ENCODE measurements at regions of chr18 and their contacts with region 1.

Region 1: GRCh38 chr18:50429207-50429948 is 54.5 kb downstream of the SKA1 start:
- DNase-seq: peak; percentile 46
- H3K4me3 Mint-ChIP-seq: no peak overlapping the region
- H3K27ac Mint-ChIP-seq: no peak overlapping the region
- H3K4me1 Mint-ChIP-seq: no peaks in the 10 kb centered on the region
- H3K27me3 Mint-ChIP-seq: no peaks in the 10 kb centered on the region
- CTCF ChIP-seq: peak; percentile 45

Region 2: DNA sequence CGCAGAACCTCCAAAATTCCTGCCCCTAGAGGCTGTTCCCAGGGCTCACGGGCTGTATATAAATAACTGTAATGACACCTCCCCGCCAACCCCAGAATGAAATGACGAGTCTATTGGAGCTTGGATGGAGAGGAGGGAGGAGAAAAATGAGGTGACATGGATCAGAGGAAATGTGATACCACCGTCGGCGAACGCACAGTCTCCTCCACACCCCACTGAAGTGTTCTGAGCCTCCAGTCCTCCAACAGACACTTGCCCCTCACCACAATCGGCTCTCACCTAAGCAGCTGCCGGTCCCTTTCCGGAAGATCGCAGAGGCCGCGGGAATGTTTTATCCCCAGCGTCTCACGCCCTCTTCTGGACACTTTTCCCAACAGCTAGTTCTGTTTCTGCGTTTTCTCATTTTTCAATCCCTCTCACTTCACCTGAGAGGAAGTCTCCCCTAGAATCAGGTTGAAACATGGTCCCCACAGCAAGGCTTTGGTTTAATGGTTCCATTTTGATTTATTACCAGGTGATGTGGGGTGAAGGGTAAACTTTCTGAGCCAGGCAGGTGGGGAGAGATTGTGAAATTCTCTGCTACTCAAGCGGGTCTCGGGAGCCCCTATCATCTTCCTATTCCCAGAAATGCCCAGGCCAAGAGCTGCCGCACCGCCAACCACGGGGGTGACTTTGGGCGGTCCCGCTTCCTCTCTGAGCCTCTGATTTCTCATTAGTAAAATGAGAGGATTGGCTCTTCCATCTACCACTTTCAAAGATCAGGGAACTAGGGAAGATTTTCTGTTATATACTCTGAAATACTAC is 225.4 kb before region 1 on chr18:
- CTCF ChIA-PET with region 1: interaction called, 11 read pairs
- POLR2A ChIA-PET with region 1: no interaction called
- intact Hi-C with region 1: no loop called
- DNase-seq: peak; percentile 70
- H3K4me3 Mint-ChIP-seq: peak overlapping the region; percentile 37
- H3K27ac Mint-ChIP-seq: no peak overlapping the region
- H3K4me1 Mint-ChIP-seq: no peaks in the 10 kb centered on the region
- H3K27me3 Mint-ChIP-seq: peaks cover 11% of the 10 kb centered on the region
- CTCF ChIP-seq: peak; percentile 68

Region 3: GRCh38 chr18:50218432-50219197 is 210.8 kb before region 1 on chr18:
- CTCF ChIA-PET with region 1: interaction called, 19 read pairs
- POLR2A ChIA-PET with region 1: no interaction called
- intact Hi-C with region 1: loop called (anchors 2 kb)
- DNase-seq: peak; percentile 53
- H3K4me3 Mint-ChIP-seq: no peak overlapping the region
- H3K27ac Mint-ChIP-seq: no peak overlapping the region
- H3K4me1 Mint-ChIP-seq: no peaks in the 10 kb centered on the region
- H3K27me3 Mint-ChIP-seq: no peaks in the 10 kb centered on the region
- CTCF ChIP-seq: peak; percentile 53

Region 4: GRCh38 chr18:50388988-50389387 is 40.4 kb before region 1 on chr18:
- CTCF ChIA-PET with region 1: interaction called, 13 read pairs
- POLR2A ChIA-PET with region 1: no interaction called
- intact Hi-C with region 1: no loop called
- DNase-seq: no peak
- H3K4me3 Mint-ChIP-seq: no peak overlapping the region
- H3K27ac Mint-ChIP-seq: no peak overlapping the region
- H3K4me1 Mint-ChIP-seq: no peaks in the 10 kb centered on the region
- H3K27me3 Mint-ChIP-seq: no peaks in the 10 kb centered on the region
- CTCF ChIP-seq: no peak

Region 5: DNA sequence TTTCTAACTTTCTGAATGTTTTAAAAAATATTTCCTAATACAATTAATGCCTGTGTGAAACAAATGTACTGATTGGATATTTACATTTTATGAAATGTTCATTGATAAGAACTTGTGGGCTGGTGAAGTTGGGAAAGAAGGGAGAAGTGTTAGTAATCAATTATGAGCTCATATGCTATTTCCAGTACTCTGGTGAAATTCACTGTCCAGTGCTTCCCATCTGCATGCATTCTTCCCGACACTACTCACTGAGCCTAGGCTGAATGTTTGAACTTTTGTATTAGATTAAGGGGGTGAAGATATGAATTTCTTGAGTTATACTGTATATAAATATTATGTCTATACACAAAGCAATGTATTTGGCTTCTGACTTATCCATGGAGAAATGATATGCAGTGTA is 18.5 kb before region 1 on chr18:
- CTCF ChIA-PET with region 1: interaction called, 12 read pairs
- POLR2A ChIA-PET with region 1: no interaction called
- intact Hi-C with region 1: no loop called
- DNase-seq: no peak
- H3K4me3 Mint-ChIP-seq: no peak overlapping the region
- H3K27ac Mint-ChIP-seq: no peak overlapping the region
- H3K4me1 Mint-ChIP-seq: peaks cover 6% of the 10 kb centered on the region
- H3K27me3 Mint-ChIP-seq: peaks cover 10% of the 10 kb centered on the region
- CTCF ChIP-seq: no peak

Region 6: GRCh38 chr18:50444539-50444938 is 15.2 kb after region 1 on chr18:
- CTCF ChIA-PET with region 1: interaction called, 13 read pairs
- POLR2A ChIA-PET with region 1: no interaction called
- intact Hi-C with region 1: no loop called
- DNase-seq: no peak
- H3K4me3 Mint-ChIP-seq: no peak overlapping the region
- H3K27ac Mint-ChIP-seq: no peak overlapping the region
- H3K4me1 Mint-ChIP-seq: no peaks in the 10 kb centered on the region
- H3K27me3 Mint-ChIP-seq: no peaks in the 10 kb centered on the region
- CTCF ChIP-seq: no peak

Region 7: DNA sequence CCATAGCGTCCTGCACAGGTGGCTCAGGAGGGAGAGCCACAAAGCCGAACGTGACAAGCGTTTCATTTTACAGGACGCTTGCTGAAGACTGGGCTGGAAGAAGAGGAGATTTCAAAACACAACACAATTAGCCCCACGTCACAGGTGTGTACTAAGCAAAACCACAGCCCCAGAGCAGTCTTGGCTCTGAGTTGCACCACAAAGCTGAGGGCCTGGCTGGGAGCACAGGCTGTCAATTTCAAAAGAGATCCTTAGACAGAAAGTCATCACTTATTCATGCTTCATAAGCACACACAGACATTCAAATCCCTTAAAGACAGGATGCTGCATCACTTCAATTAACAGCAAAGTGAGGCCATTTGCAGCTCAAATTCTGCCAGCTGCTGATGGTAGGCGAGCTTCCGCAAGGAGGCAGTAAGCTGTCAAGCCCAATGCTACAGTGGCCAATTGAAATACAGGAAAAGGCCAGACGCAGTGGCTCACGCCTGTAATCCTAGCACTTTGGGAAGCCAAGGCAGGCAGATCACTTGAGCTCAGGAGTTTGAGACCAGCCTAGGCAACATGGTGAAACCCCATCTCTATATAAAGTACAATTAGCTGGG is 25.1 kb after region 1 on chr18:
- CTCF ChIA-PET with region 1: interaction called, 15 read pairs
- POLR2A ChIA-PET with region 1: interaction called, 3 read pairs
- intact Hi-C with region 1: no loop called
- DNase-seq: peak; percentile 89
- H3K4me3 Mint-ChIP-seq: peak overlapping the region; percentile 10
- H3K27ac Mint-ChIP-seq: peak overlapping the region; percentile 84
- H3K4me1 Mint-ChIP-seq: peaks cover 23% of the 10 kb centered on the region
- H3K27me3 Mint-ChIP-seq: no peaks in the 10 kb centered on the region
- CTCF ChIP-seq: no peak

Measured in MCF 10A (cell line).